PC-9 (cell line): ENCODE measurements at regions of chr10 and their contacts with region 1.

Region 1: GRCh38 chr10:106967452-106967851 is 197.1 kb downstream of the SORCS1 start:
- DNase-seq: no peak
- H3K4me3 ChIP-seq: no peak overlapping the region
- H3K27ac ChIP-seq: no peak overlapping the region
- H3K4me1 ChIP-seq: no peaks in the 10 kb centered on the region
- H3K27me3 ChIP-seq: no peaks in the 10 kb centered on the region
- CTCF ChIP-seq: no peak

Region 2: GRCh38 chr10:106980495-106981451 is 13.3 kb after region 1 on chr10:
- CTCF ChIA-PET with region 1: no interaction called
- POLR2A ChIA-PET with region 1: interaction called, 10 read pairs
- intact Hi-C with region 1: no loop called
- DNase-seq: no peak
- H3K4me3 ChIP-seq: no peak overlapping the region
- H3K27ac ChIP-seq: no peak overlapping the region
- H3K4me1 ChIP-seq: no peaks in the 10 kb centered on the region
- H3K27me3 ChIP-seq: no peaks in the 10 kb centered on the region
- CTCF ChIP-seq: no peak